ENCODE measurements at regions of chr4 and their contacts with region 1.

Region 1: GRCh38 chr4:109826719-109827118 is 1.1 kb upstream of the RRH start:
- DNase-seq: peak; percentile 38

Region 2: GRCh38 chr4:109967797-109968507 is 141.2 kb after region 1 on chr4:
- in situ Hi-C with region 1: loop called (anchors 25 kb)
- DNase-seq: peak; percentile 50

Region 3: DNA sequence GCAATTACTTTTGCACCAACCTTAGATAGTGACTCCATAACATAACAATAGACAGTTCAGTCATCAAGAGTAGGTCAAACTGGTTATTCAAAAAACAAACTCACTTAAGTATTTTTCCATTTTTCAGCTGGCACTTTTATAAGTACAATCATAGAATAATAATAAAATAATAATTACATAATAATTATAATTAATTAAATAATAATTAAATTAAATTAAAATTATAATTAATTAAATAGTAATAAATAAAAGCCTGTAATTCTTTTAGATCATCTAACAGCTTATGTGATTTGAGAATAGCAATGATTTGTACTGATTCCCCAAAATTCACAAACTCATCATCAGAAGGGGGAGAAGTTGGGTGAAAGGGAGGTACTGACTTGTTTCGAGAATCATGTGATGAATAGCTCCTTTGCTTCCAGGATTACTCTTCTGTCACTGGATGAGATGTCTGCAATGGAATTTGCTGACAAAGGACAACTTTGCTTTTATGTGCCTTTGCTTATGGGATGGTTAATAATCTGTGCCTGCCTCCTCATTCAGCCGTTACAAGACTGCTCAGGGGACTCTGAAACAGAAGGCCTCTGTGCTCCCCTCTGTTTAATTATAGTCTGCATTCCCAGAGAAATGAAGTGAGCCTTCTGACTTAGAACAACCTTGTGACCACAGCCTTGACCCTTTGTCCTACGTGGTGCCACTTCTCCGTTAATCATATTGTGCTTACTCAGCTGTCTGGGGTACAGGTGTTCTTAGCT is 544.5 kb after region 1 on chr4:
- in situ Hi-C with region 1: no loop called
- DNase-seq: no peak

Measured in KBM-7 (cell line).